Colonic mucosa (tissue), 4 donors: ENCODE measurements at regions of chr6 and their contacts with region 1.

Region 1: GRCh38 chr6:89311853-89312531 is 3.1 kb downstream of the GABRR2 start:
- DNase-seq: peak; percentile 56
- H3K4me3 ChIP-seq: no peak overlapping the region
- H3K27ac ChIP-seq: peak overlapping the region; percentile 32
- H3K4me1 ChIP-seq: peaks cover 10% of the 10 kb centered on the region
- H3K27me3 ChIP-seq: no peaks in the 10 kb centered on the region
- CTCF ChIP-seq: no peak

Region 2: GRCh38 chr6:89371849-89372505 is 60.0 kb after region 1 on chr6:
- intact Hi-C with region 1: loop called (anchors 10 kb)
- DNase-seq: peak; percentile 76
- H3K4me3 ChIP-seq: no peak overlapping the region
- H3K27ac ChIP-seq: no peak overlapping the region
- H3K4me1 ChIP-seq: no peaks in the 10 kb centered on the region
- H3K27me3 ChIP-seq: no peaks in the 10 kb centered on the region
- CTCF ChIP-seq: peak; percentile 84

Region 3: GRCh38 chr6:89458704-89459103 is 146.7 kb after region 1 on chr6:
- intact Hi-C with region 1: no loop called
- DNase-seq: no peak
- H3K4me3 ChIP-seq: no peak overlapping the region
- H3K27ac ChIP-seq: no peak overlapping the region
- H3K4me1 ChIP-seq: no peaks in the 10 kb centered on the region
- H3K27me3 ChIP-seq: no peaks in the 10 kb centered on the region
- CTCF ChIP-seq: no peak